Gastrocnemius medialis (tissue), 4 donors: ENCODE measurements at regions of chr6 and their contacts with region 1.

Region 1: DNA sequence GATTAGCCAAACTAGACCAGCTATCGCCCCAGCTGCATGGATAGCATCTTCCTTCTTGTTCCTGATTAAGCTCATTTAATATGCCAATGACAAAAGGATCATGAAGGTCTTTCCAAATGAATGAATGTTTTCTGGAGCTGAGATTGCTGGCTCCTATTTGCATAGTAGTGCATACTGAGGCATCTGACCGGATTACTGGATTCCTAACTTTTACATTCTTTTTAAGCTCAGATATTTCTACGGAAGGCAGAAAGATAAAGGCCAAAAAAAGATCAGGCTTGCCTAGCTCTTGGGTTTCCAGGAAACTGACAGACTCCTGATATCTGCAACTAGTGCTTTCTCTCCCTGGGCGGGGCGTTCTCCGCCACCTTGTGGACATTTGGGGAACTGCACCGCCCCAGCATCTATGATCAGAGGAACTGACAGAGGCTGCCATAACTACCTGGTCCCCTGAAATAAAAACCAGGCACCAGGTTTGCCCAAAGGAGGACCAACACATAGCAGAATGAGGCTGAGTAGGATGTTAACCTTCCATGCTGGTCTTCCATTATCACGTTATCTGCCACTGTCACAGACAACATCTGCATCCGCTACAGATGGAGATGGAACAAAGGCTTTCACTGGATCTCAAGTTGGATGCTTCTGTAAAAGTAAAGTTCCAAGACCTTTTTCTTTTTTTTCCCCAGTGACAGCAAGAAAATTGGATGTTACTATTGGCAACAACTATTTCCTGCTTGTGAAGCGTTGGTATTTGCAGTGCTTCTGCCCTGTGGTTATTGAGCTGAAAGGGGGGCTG is 33.2 kb downstream of the NT5E start:
- DNase-seq: peak; percentile 14 to 50
- ATAC-seq: peak; percentile 56 to 90
- H3K4me3 ChIP-seq: no peak overlapping the region
- H3K27ac ChIP-seq: no peak overlapping the region
- H3K4me1 ChIP-seq: no peaks in the 10 kb centered on the region
- H3K27me3 ChIP-seq: no peaks in the 10 kb centered on the region
- CTCF ChIP-seq: peak; percentile 83 to 99 (median 90)
- POLR2A ChIP-seq: no peak

Region 2: GRCh38 chr6:85354761-85355618 is 128.1 kb before region 1 on chr6:
- in situ Hi-C with region 1: loop called (anchors 5 to 10 kb)
- intact Hi-C with region 1: loop called (anchors 1 kb)
- DNase-seq: peak; percentile 3 to 44
- ATAC-seq: peak; percentile 54 to 71
- H3K4me3 ChIP-seq: no peak overlapping the region
- H3K27ac ChIP-seq: no peak overlapping the region
- H3K4me1 ChIP-seq: no peaks in the 10 kb centered on the region
- H3K27me3 ChIP-seq: no peaks in the 10 kb centered on the region
- CTCF ChIP-seq: peak; percentile 65 to 93 (median 79)
- POLR2A ChIP-seq: no peak

Region 3: GRCh38 chr6:85360794-85361642 is 122.1 kb before region 1 on chr6:
- in situ Hi-C with region 1: loop called in 2 of 4 experiments (anchors 5 to 10 kb)
- intact Hi-C with region 1: no loop called
- DNase-seq: no peak
- ATAC-seq: peak; percentile 21 to 58
- H3K4me3 ChIP-seq: no peak overlapping the region
- H3K27ac ChIP-seq: no peak overlapping the region
- H3K4me1 ChIP-seq: no peaks in the 10 kb centered on the region
- H3K27me3 ChIP-seq: no peaks in the 10 kb centered on the region
- CTCF ChIP-seq: no peak
- POLR2A ChIP-seq: no peak

Region 4: GRCh38 chr6:85551264-85551663 is 68.2 kb after region 1 on chr6:
- in situ Hi-C with region 1: no loop called
- intact Hi-C with region 1: no loop called
- DNase-seq: no peak
- ATAC-seq: no peak
- H3K4me3 ChIP-seq: no peak overlapping the region
- H3K27ac ChIP-seq: no peak overlapping the region
- H3K4me1 ChIP-seq: no peaks in the 10 kb centered on the region
- H3K27me3 ChIP-seq: no peaks in the 10 kb centered on the region
- CTCF ChIP-seq: no peak
- POLR2A ChIP-seq: no peak